Dorsolateral prefrontal cortex (tissue), 120 donors: ENCODE measurements at regions of chr10 and their contacts with region 1.

Region 1: DNA sequence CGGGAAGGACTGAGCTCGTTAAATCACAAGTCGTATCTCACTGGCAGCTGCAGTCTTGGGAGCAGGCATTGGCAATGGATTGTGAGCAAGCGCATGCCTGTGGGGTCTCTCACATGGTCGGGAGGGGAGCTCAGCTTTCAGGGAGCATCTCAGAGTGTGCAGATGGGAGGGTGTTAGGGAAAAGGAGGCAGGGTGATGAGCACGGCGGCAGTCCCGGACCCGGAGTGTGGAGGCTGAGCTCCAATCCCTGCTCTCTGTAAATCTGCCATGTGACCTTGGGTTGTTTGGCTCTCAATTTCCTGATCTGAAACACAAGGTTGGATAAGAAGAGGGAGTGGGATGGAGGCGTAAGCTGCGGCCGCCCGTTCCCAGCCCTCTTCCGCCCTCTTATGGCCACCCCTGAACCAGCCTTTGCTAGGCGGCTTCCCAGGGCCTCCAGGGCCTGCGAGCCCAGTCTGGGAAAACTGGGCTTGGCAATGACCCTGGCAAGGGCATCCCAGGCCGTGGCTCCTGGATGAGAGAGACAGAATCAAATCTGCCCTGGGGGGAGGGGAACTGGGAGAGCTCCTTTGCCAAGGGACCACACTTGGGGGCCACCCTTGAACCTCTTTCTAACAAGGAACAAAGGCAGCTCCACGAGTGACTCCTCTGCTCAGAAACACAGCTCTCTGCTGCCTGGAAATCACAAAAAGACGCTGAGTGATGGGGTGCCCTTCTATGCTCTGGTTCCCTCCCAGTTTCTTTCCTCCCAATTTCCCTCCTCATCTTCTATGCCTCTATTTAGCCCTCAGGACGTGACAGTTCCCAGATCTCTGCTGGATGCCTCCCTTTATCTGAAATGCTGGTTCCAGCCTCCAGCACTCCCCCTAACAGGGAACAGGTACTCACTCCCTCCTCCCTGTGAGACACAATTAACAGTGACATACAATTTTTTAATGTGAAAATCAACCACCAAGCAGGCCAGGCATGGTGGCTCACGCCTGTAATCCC is 41.7 kb upstream of the LOXL4 start:
- DNase-seq: peak; percentile 54 to 85 (median 67)
- H3K4me3 ChIP-seq: peak overlapping the region in 39 of 59 donors; percentile 0 to 53 (median 33)
- H3K27ac ChIP-seq: peak overlapping the region in 48 of 59 donors; percentile 3 to 84 (median 50)
- H3K27me3 ChIP-seq: no peaks in the 10 kb centered on the region
- CTCF ChIP-seq: peak in 54 of 56 donors; percentile 47 to 91 (median 76)

Region 2: GRCh38 chr10:97762816-97763215 is 546.8 kb before region 1 on chr10:
- intact Hi-C with region 1: loop called in 1 of 2 experiments (anchors 10 kb)
- DNase-seq: no peak
- H3K4me3 ChIP-seq: no peak overlapping the region
- H3K27ac ChIP-seq: peak overlapping the region in 30 of 59 donors; percentile 1 to 73 (median 44)
- H3K27me3 ChIP-seq: no peaks in the 10 kb centered on the region
- CTCF ChIP-seq: no peak

Region 3: GRCh38 chr10:97903128-97904017 is 406.3 kb before region 1 on chr10:
- intact Hi-C with region 1: no loop called
- DNase-seq: peak in 1 of 10 donors; percentile 56
- H3K4me3 ChIP-seq: no peak overlapping the region
- H3K27ac ChIP-seq: no peak overlapping the region
- H3K27me3 ChIP-seq: no peaks in the 10 kb centered on the region
- CTCF ChIP-seq: no peak

Region 4: GRCh38 chr10:97914837-97915211 is 394.8 kb before region 1 on chr10:
- intact Hi-C with region 1: loop called (anchors 5 to 10 kb)
- DNase-seq: peak; percentile 76 to 87 (median 82)
- H3K4me3 ChIP-seq: peak overlapping the region in 10 of 59 donors; percentile 3 to 50 (median 18)
- H3K27ac ChIP-seq: peak overlapping the region in 14 of 59 donors; percentile 1 to 87 (median 78)
- H3K27me3 ChIP-seq: no peaks in the 10 kb centered on the region
- CTCF ChIP-seq: peak; percentile 69 to 99 (median 96)

Region 5: GRCh38 chr10:98170249-98171117 is 139.2 kb before region 1 on chr10:
- intact Hi-C with region 1: loop called in 1 of 2 experiments (anchors 2 kb)
- DNase-seq: peak in 3 of 10 donors; percentile 29 to 53 (median 31)
- H3K4me3 ChIP-seq: no peak overlapping the region
- H3K27ac ChIP-seq: no peak overlapping the region
- H3K27me3 ChIP-seq: no peaks in the 10 kb centered on the region
- CTCF ChIP-seq: peak; percentile 58 to 87 (median 80)

Region 6: DNA sequence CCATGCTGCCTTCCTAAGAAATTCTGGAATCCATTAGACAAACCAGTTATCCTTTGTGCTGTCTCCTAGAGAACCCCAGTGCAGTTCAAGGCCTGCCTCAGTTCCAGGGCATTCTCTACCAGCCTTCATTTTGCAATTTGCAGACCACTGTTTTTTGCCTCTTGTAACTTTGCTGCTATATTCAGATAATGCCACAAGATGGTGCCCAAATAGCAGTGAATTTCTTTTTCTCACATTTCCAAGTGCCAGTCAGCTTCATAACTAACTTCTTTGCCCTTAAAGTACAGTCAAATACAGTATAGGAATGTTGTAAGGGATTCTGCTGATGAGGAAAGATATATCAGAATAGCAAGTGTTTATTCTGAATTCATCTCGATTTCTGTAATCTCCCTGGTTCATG is 66.8 kb before region 1 on chr10:
- intact Hi-C with region 1: loop called in 1 of 2 experiments (anchors 2 kb)
- DNase-seq: no peak
- H3K4me3 ChIP-seq: no peak overlapping the region
- H3K27ac ChIP-seq: no peak overlapping the region
- H3K27me3 ChIP-seq: no peaks in the 10 kb centered on the region
- CTCF ChIP-seq: peak; percentile 35 to 79 (median 61)

Region 7: DNA sequence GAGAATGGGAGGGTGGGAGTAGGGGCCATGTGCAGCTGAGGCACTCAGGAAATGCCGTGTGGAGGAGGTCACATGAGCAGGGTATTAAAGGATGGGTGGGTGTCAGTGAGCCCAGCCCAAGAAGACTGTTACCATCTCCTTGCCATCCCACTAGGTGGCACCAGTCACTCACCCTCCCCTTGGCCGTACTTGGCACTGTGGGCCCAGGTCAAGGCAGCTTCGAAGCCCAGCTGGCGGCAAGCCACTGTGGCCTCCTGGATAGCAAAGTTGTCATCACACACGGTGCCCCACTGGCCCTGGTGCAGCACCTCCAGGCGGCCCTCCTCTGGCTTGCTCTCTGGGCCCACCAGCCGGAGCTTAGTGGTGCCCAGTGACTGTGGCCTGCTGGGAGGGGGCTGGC is 47.1 kb before region 1 on chr10:
- intact Hi-C with region 1: loop called in 1 of 2 experiments (anchors 5 kb)
- DNase-seq: no peak
- H3K4me3 ChIP-seq: no peak overlapping the region
- H3K27ac ChIP-seq: no peak overlapping the region
- H3K27me3 ChIP-seq: peaks cover 0 to 4% (median 0%) of the 10 kb centered on the region in 45 donors
- CTCF ChIP-seq: peak in 36 of 56 donors; percentile 8 to 50 (median 26)

Region 8: GRCh38 chr10:98391578-98391991 is 81.9 kb after region 1 on chr10:
- intact Hi-C with region 1: loop called in 1 of 2 experiments (anchors 5 kb)
- DNase-seq: peak in 4 of 10 donors; percentile 27 to 86 (median 46)
- H3K4me3 ChIP-seq: no peak overlapping the region
- H3K27ac ChIP-seq: no peak overlapping the region
- H3K27me3 ChIP-seq: no peaks in the 10 kb centered on the region
- CTCF ChIP-seq: no peak

Region 9: DNA sequence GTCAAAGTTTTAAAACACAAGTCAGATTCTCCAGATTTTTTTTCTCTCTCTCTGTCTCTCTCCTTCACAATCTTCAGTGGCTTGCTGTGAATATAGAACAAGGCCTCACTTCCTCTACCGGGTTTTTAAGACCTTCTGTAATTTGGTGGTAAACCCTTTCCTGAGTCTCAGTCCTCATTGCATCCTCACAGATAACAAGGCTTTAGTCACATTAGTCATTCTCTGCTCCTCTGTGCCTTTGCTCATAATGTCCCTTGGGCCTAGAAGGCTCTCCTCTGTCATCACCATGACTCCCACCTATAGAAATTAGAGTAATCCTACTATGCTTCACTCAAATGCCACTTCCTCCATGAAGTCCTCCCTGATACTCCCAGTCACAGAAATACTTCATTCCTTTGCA is 309.8 kb after region 1 on chr10:
- intact Hi-C with region 1: no loop called
- DNase-seq: no peak
- H3K4me3 ChIP-seq: no peak overlapping the region
- H3K27ac ChIP-seq: no peak overlapping the region
- H3K27me3 ChIP-seq: peaks cover 0 to 6% (median 0%) of the 10 kb centered on the region in 45 donors
- CTCF ChIP-seq: no peak